Right cardiac atrium (tissue), 5 donors: ENCODE measurements at regions of chr1 and their contacts with region 1.

Region 1: DNA sequence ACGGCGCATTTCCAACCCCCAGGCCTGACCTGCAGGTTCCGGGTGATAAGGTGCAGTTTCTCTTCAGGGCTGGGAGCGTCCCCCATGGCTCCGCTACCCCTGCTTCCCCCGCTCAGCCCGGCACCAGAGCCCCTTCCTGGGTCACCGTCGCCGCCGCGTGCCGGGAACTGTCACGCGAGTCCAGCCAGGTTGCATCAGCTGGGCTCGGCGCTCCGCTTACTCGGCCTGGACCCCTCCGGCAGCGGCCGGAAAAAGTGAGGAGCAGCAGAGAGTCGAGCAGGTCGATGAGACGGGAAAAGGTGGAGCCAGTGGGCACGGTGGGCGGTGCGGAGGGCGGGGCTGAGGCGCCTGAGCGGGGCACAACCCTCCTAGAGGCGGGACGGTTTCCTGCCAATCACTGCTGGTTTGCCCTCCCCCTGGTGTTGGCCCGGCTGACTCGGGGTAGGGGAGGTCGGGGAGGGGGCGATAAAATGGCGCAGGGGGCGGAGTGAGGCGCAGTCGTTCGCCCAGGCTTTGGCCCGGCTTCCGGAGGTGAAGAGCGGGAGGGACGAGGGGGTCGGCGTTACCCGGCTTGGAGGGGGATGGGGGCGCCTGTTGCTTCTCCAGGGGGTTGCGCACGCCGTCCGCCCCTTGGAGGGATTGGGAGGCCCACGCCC is at the starts of genes S100PBP and YARS1:
- DNase-seq: peak; percentile 99 to 100 (median 100)
- ATAC-seq: peak; percentile 98
- H3K4me3 ChIP-seq: peak within 1 kb of the TSS; percentile 70
- H3K27ac ChIP-seq: peak within 1 kb of the TSS; percentile 91
- H3K4me1 ChIP-seq: peaks cover 7% of the 10 kb centered on the region
- H3K27me3 ChIP-seq: no peaks in the 10 kb centered on the region
- total RNA-seq, gene S100PBP: 14.2 to 19.8 (median 15.4) TPM
- total RNA-seq, gene YARS1: 29.3 to 54.7 (median 36.4) TPM

Region 2: DNA sequence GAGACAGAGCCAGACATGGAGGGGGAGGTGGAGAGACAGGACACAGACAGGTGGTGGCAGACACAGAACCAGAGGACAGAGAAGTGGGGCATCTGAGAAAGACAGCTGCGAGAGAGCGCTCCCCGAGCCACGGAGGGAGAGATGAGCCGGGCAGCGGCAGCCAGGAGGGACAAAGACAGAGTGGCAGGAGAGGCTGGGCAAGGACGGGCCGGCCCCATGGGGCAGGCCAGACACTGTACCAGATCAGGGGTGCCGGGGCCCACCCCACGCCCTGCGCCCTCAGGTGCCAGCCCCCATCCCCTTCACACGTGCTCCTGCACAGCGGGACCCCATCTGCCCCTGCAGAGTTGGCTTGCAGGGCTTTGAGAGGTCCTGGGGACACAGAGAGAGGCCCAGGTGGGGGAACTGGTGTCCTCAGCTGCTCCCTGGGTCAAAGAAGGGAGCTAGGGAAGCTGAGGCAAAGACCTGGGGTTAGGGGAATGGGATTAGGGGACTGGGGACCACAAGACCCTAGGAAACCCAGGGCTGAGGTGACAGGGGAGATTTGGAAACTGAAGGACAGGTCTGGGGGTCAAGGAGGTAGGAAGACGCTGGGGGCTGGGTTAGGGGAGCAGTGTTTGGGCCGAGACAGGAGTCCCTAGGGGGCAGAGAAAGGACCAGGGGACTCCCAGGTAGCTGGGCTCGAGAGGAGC is 52.8 kb after region 1 on chr1:
- intact Hi-C with region 1: loop called in 1 of 4 experiments (anchors 5 kb)
- DNase-seq: peak in 2 of 3 donors; percentile 50 to 69
- ATAC-seq: peak; percentile 6 to 9
- H3K4me3 ChIP-seq: peak overlapping the region; percentile 79
- H3K27ac ChIP-seq: peak overlapping the region; percentile 57
- H3K4me1 ChIP-seq: no peaks in the 10 kb centered on the region
- H3K27me3 ChIP-seq: no peaks in the 10 kb centered on the region

Region 3: GRCh38 chr1:32939655-32940371 is 122.5 kb after region 1 on chr1:
- intact Hi-C with region 1: no loop called
- DNase-seq: peak; percentile 68 to 77 (median 72)
- ATAC-seq: peak; percentile 83 to 92
- H3K4me3 ChIP-seq: no peak overlapping the region
- H3K27ac ChIP-seq: peak overlapping the region; percentile 36
- H3K4me1 ChIP-seq: peaks cover 3% of the 10 kb centered on the region
- H3K27me3 ChIP-seq: no peaks in the 10 kb centered on the region